ENCODE measurements at regions of chr18 and their contacts with region 1.

Region 1: DNA sequence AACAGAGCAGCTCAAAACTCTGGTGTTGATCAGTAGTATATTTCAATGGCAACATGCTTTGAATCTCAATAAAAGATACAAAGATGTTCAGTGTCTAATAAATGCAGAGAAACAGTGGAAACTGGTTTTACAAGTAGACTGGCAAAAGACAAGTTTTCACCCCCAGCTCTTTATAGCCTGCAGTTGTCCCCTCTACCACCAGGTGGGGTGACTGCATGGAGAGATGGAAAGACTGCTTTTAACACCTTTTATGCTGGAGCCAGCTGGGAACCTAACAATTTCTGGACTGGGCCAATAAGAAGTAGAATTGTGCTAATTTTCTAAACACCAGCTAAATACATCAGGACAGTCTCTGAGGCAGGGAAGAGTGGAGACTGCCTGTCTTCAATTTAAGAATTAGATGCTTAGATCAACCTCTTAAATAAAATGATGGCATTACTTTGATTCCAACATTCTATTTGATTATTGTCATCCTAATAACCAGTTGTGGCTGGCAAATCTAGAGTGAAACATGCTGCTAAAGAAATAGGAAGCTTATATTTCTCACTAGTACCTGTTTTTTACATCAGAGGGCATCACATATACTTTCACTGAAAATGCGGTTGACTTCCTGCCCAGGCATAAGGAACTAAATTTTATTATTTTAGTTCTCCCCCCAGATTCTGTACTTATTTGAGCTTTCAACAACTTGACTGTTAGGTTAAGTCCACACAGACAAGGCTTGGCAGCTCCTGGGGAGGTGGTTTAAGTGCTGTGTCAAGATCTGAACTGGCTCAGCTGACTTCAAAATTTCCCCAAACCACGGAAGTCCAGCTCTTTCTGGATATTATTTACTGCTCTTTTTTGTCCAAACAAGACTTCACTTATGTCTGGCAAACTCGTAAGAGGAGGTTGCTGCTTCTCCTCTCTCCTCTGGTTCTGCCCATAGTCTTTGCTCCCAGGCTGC is 140.5 kb downstream of the TPGS2 start:
- DNase-seq: peak; percentile 43
- H3K4me3 ChIP-seq: no peak overlapping the region
- H3K27ac ChIP-seq: no peak overlapping the region
- H3K4me1 ChIP-seq: no peaks in the 10 kb centered on the region
- CTCF ChIP-seq: peak; percentile 80

Region 2: GRCh38 chr18:36757081-36757480 is 68.8 kb after region 1 on chr18:
- CTCF ChIA-PET with region 1: interaction called, 8 read pairs
- POLR2A ChIA-PET with region 1: interaction called, 3 read pairs
- intact Hi-C with region 1: loop called (anchors 1 kb)
- DNase-seq: peak; percentile 31
- H3K4me3 ChIP-seq: no peak overlapping the region
- H3K27ac ChIP-seq: no peak overlapping the region
- H3K4me1 ChIP-seq: no peaks in the 10 kb centered on the region
- CTCF ChIP-seq: peak; percentile 71

Region 3: DNA sequence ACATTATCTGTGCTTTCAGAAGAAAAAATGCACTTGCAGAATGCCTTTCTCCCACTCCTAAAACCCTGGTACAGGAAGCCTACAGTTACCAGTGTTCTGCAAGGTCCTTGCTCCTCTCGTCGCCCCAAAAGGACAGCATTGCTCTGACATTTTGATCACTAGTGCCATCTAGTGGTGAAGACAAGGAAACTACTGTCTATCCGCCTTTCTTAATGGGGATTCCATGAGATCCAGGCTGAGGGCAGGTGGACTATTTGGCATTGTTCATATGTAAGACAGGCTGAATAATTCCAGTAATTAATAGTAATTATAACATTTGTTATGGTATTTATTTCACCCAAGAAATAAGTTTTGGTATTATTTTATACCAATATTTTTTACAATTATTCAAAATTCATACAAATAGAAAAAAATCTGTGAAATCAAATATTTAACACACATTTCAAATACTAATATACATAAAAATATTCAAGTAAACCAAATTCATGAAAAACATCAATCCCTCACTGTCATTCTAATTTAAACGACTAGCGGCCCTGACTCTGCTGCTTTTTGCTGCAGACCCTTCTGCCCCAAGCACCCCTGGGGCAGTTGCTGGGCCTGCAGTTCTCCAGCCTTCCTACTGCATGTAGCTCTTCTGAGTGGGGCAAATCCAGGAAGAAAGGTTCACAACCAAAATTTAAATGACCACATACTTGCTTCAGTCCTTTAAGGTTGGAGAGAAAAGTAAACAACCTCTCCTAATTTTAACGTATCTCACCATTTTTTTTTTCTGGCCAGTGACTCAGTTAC is 121.5 kb after region 1 on chr18:
- CTCF ChIA-PET with region 1: no interaction called
- POLR2A ChIA-PET with region 1: no interaction called
- intact Hi-C with region 1: loop called (anchors 1 kb)
- DNase-seq: peak; percentile 63
- H3K4me3 ChIP-seq: no peak overlapping the region
- H3K27ac ChIP-seq: no peak overlapping the region
- H3K4me1 ChIP-seq: no peaks in the 10 kb centered on the region
- CTCF ChIP-seq: peak; percentile 77

Region 4: GRCh38 chr18:36899289-36899688 is 211.0 kb after region 1 on chr18:
- CTCF ChIA-PET with region 1: no interaction called
- POLR2A ChIA-PET with region 1: no interaction called
- intact Hi-C with region 1: loop called (anchors 10 kb)
- DNase-seq: peak; percentile 11
- H3K4me3 ChIP-seq: no peak overlapping the region
- H3K27ac ChIP-seq: no peak overlapping the region
- H3K4me1 ChIP-seq: no peaks in the 10 kb centered on the region
- CTCF ChIP-seq: peak; percentile 70